ENCODE measurements at regions of chr5 and their contacts with region 1.

Region 1: DNA sequence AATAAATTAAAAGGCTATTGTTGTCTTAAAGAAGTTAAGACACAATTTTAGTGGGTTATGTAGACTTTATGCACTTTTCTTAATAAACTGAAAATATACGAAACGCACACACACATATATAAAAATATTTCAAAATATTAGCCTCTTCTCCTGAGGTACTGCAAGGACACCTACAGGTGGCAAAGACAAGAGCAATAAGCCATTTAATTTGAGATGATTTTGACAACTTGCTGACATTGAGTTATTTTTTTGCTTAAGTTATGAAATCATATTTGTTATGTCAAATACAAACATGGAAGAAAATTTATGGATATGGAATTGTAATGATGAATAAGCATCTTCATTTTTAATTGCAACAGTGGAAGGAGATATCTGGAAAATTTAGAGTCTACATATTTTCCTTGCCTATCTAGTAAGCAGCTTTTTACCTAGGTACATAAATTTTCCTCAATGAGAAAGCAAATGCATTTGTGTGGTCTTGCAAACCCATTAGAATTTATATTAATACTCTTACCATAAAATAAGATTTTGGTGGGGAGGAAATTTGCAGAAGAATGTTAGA is 301.6 kb downstream of the ISL1 start:
- DNase-seq: no peak
- ATAC-seq: no peak

Region 2: DNA sequence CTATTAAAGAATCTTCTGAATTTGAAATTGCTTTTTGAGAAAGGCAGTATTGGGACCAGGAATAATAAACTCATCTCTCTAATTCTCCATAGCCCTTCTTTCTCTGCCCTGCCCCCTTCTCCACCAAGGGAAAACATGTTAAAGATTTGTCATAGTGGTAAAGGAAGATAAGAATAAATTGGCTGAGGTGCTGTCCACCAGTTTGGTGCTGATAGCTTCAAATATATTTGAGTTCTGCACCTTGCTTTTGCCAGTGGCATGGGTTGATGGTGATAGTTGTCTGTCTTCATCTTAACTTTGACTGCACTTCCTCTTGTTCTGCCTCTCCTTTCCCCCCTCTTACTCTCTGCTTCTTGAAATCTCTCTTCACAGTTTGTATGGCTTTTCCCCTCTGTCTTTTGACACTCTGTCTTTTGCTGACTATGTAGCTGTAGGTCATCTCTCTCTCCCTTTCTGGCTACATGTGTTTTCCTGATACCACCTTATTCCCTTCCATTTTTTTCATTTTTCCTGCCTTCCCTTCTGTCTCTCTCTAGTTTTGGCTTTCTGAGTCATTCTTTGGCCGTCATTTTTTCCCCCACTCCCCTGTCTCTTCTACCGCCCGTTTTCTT is 1932.2 kb after region 1 on chr5:
- intact Hi-C with region 1: loop called (anchors 10 kb)
- DNase-seq: no peak
- ATAC-seq: no peak

Measured in sciatic nerve (tissue), 2 donors.